Sigmoid colon (tissue), 7 donors: ENCODE measurements at regions of chr9 and their contacts with region 1.

Region 1: DNA sequence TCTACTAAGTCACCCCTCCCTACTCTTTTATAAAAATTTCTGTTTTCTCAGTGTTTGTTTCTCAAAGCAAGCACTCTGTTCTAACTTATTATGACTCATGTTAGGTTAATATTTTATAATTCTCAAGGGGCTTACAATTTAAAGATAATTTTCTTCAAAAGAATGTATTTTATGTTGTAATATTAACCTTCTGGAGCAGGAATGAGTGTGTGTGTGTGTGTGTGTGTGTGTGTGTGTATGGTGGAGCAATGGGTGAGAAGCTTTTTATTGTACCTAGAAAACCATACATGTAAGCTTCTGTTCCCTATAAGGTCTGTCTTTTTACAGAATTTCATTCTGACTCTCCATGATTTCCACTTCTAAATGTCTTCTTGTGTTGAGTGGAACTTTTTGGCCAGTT is 63.0 kb downstream of the PBX3 start:
- DNase-seq: no peak
- H3K4me3 ChIP-seq: no peak overlapping the region
- H3K27ac ChIP-seq: no peak overlapping the region
- H3K4me1 ChIP-seq: peaks cover 0 to 40% (median 19%) of the 10 kb centered on the region in 4 donors
- H3K27me3 ChIP-seq: no peaks in the 10 kb centered on the region
- CTCF ChIP-seq: no peak
- EP300 ChIP-seq: no peak
- POLR2A ChIP-seq: no peak

Region 2: GRCh38 chr9:125774106-125774505 is 36.1 kb before region 1 on chr9:
- intact Hi-C with region 1: loop called (anchors 5 kb)
- DNase-seq: no peak
- H3K4me3 ChIP-seq: no peak overlapping the region
- H3K27ac ChIP-seq: no peak overlapping the region
- H3K4me1 ChIP-seq: peaks cover 0 to 28% (median 15%) of the 10 kb centered on the region in 4 donors
- H3K27me3 ChIP-seq: no peaks in the 10 kb centered on the region
- CTCF ChIP-seq: no peak
- EP300 ChIP-seq: no peak
- POLR2A ChIP-seq: no peak